HEK293 (cell line): ENCODE measurements at regions of chrX and their contacts with region 1.

Region 1: GRCh38 chrX:150792949-150793527 is 99.8 kb downstream of the MTMR1 start:
- H3K4me3 ChIP-seq: no peak overlapping the region
- H3K27ac ChIP-seq: no peak overlapping the region
- H3K4me1 ChIP-seq: no peaks in the 10 kb centered on the region
- CTCF ChIP-seq: no peak

Region 2: DNA sequence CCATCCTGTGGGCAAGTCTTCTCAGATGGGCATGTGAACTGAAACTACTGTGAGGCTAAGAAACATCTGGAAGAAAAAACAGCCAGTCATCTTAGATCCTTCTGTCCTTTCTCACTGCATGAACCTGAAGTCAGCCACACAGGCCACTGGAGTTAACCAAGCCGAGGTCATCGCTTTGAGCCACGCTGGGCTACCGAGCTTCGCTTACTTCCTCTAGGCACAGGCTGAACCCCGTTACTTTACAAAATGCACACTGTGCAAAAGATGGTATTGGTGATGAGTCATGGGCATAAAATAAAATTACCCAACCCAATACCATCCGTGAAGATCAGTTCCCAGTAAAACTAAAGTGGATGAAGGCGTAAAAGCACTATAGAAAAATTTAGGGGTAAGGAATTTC is 13.7 kb before region 1 on chrX:
- CTCF ChIA-PET with region 1: interaction called, 10 read pairs
- POLR2A ChIA-PET with region 1: no interaction called
- H3K4me3 ChIP-seq: no peak overlapping the region
- H3K27ac ChIP-seq: no peak overlapping the region
- H3K4me1 ChIP-seq: no peaks in the 10 kb centered on the region
- CTCF ChIP-seq: no peak

Region 3: DNA sequence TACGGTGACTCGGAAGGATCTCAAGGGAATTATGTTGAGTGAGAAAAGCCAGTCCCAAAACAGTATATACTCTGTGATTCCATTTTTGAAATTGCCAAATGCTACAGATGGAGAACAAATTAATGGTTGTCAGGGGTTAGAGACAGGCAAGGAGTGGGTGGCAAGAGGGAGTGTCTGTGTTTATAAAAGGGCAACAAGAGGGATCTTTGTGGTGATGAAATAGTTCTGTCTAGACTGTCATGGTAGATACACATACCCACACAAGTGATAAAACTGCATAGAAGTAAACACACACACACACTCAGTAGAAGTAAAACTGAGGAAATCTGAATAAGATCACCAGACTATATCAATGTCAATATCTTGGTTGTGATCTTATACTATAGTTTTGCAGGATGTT is 12.7 kb after region 1 on chrX:
- CTCF ChIA-PET with region 1: no interaction called
- POLR2A ChIA-PET with region 1: no interaction called
- H3K4me3 ChIP-seq: no peak overlapping the region
- H3K27ac ChIP-seq: no peak overlapping the region
- H3K4me1 ChIP-seq: no peaks in the 10 kb centered on the region
- CTCF ChIP-seq: no peak